Endothelial cell of umbilical vein (primary cell): ENCODE measurements at regions of chr16 and their contacts with region 1.

Region 1: DNA sequence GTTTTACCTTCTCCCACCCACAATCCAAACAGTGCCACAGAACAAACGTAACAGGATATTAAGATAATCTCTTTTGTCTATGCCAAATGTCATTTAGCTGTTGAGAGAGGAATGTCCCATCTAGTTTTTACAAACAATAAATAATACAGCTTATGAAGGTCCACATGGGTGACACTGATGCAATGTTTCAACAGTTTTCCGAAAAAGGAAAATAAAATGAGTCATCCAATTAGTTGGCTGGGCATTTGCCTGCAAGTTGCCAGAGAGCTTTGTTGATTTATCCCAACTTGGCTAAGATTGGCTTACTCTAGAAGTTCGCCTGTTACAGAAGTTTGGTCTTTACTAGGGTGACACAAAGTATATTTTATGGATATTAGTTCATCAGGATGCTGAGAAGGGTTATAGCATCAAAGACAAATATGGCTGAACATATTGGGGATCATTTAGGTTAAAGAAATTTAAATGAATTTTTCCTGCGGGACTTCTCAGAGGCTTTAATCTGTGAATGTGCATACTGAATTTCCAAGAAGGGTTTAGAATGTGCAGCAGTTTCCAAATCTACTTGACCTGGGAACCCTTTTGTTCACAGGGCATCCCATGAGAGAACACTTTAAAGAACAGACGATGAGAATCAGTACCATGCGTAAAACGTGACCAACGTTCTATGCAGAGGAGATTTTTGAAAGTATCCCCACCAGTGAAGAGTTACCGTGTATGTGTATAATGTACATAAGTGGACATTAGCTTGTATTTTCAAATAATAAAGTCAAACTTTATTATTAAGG is 73.1 kb downstream of the CDH13 start:
- DNase-seq: peak; percentile 96
- H3K4me3 ChIP-seq: no peak overlapping the region
- H3K27ac ChIP-seq: peak overlapping the region; percentile 76
- H3K4me1 ChIP-seq: peaks cover 46% of the 10 kb centered on the region
- H3K27me3 ChIP-seq: no peaks in the 10 kb centered on the region
- CTCF ChIP-seq: no peak
- POLR2A ChIP-seq: no peak

Region 2: DNA sequence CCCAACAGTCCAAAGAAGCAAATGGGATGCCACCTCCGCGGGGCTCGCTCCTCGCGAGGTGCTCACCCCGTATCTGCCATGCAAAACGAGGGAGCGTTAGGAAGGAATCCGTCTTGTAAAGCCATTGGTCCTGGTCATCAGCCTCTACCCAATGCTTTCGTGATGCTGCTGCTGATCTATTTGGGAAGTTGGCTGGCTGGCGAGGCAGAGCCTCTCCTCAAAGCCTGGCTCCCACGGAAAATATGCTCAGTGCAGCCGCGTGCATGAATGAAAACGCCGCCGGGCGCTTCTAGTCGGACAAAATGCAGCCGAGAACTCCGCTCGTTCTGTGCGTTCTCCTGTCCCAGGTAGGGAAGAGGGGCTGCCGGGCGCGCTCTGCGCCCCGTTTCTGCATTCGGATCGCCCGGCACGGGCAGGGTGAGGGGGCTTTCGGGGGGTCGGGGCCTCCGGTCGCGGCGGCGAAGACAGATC is 73.1 kb before region 1 on chr16 and contains the start of gene CDH13:
- CTCF ChIA-PET with region 1: interaction called, 14 read pairs
- POLR2A ChIA-PET with region 1: no interaction called
- dilution Hi-C with region 1: no loop called
- intact Hi-C with region 1: no loop called
- DNase-seq: peak; percentile 62
- H3K4me3 ChIP-seq: peak within 1 kb of the TSS; percentile 52 to 82 (median 66)
- H3K27ac ChIP-seq: peak within 1 kb of the TSS; percentile 96
- H3K4me1 ChIP-seq: peaks cover 46% of the 10 kb centered on the region
- H3K27me3 ChIP-seq: peaks cover 0 to 2% of the 10 kb centered on the region in 2 experiments
- CTCF ChIP-seq: no peak
- POLR2A ChIP-seq: no peak
- total RNA-seq, gene CDH13: 98.5 and 124 TPM in 2 replicates

Region 3: DNA sequence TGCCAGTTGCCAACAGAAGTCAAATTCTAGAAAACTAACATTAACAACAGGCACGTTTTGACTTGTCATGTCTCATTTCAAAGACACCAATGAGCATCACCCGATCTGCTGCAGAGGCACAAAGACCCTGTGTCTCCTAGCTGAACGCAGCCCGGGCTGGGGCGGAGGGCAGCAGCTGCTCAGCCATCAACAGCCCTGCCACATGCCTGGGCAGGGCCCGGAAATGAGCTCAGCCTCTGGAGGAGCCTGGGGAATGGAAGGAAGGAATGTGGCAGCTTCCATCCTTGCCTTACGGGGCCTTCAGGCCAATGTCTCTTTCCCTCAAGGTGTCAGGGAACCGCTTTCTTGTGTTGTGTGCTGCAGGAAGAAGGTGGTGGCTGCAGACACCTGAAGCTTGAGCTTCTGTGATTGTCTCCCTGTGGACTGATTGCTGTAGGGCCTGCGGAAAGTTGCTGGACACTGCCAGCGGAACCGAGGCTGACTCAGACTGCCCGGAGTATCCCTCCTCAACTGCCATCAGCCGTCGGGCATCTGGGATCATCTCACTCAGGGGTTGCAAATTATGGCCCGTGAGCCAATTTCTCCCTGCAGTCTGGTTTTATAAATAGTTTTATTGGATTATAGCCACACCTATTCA is 65.8 kb before region 1 on chr16:
- CTCF ChIA-PET with region 1: interaction called, 14 read pairs
- POLR2A ChIA-PET with region 1: no interaction called
- dilution Hi-C with region 1: no loop called
- intact Hi-C with region 1: loop called (anchors 1 kb)
- DNase-seq: peak; percentile 87
- H3K4me3 ChIP-seq: no peak overlapping the region
- H3K27ac ChIP-seq: peak overlapping the region; percentile 78
- H3K4me1 ChIP-seq: peaks cover 78% of the 10 kb centered on the region
- H3K27me3 ChIP-seq: no peaks in the 10 kb centered on the region
- CTCF ChIP-seq: no peak
- POLR2A ChIP-seq: peak; percentile 27

Region 4: GRCh38 chr16:82653550-82654511 is 46.1 kb before region 1 on chr16:
- CTCF ChIA-PET with region 1: interaction called, 8 read pairs
- POLR2A ChIA-PET with region 1: interaction called, 3 read pairs
- dilution Hi-C with region 1: no loop called
- intact Hi-C with region 1: loop called (anchors 1 kb)
- DNase-seq: peak; percentile 84
- H3K4me3 ChIP-seq: peak overlapping the region in 1 of 3 experiments; percentile 7
- H3K27ac ChIP-seq: peak overlapping the region; percentile 91
- H3K4me1 ChIP-seq: peaks cover 65% of the 10 kb centered on the region
- H3K27me3 ChIP-seq: no peaks in the 10 kb centered on the region
- CTCF ChIP-seq: no peak
- POLR2A ChIP-seq: no peak

Region 5: GRCh38 chr16:82735673-82736091 is 35.8 kb after region 1 on chr16:
- CTCF ChIA-PET with region 1: no interaction called
- POLR2A ChIA-PET with region 1: no interaction called
- dilution Hi-C with region 1: no loop called
- intact Hi-C with region 1: no loop called
- DNase-seq: no peak
- H3K4me3 ChIP-seq: no peak overlapping the region
- H3K27ac ChIP-seq: no peak overlapping the region
- H3K4me1 ChIP-seq: no peaks in the 10 kb centered on the region
- H3K27me3 ChIP-seq: no peaks in the 10 kb centered on the region
- CTCF ChIP-seq: no peak
- POLR2A ChIP-seq: no peak

Region 6: DNA sequence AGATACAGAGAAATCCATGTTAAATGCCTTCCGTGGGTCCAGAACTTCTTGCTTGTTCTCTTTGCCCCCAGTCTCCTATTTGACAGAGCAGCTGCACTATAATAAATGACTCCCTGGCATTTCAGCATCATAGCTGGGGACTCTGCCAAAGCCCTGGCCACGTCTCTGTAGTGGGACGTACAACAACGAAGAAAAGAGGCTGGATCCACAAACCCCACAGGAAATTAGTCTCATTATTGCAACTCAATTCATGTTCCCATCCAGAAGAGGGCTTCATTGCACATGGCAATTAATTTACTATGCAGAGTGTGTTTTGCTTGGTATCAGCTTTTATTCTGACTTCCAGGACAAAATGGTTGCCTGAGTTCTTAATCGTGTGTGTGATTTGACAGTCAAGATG is 48.1 kb after region 1 on chr16:
- CTCF ChIA-PET with region 1: interaction called, 3 read pairs
- POLR2A ChIA-PET with region 1: no interaction called
- dilution Hi-C with region 1: no loop called
- intact Hi-C with region 1: loop called (anchors 1 kb)
- DNase-seq: peak; percentile 94
- H3K4me3 ChIP-seq: peak overlapping the region in 1 of 3 experiments; percentile 7
- H3K27ac ChIP-seq: peak overlapping the region; percentile 57
- H3K4me1 ChIP-seq: peaks cover 38% of the 10 kb centered on the region
- H3K27me3 ChIP-seq: no peaks in the 10 kb centered on the region
- CTCF ChIP-seq: peak; percentile 29 to 40
- POLR2A ChIP-seq: no peak

Region 7: GRCh38 chr16:83002351-83003334 is 302.7 kb after region 1 on chr16:
- CTCF ChIA-PET with region 1: no interaction called
- POLR2A ChIA-PET with region 1: no interaction called
- dilution Hi-C with region 1: no loop called
- intact Hi-C with region 1: loop called (anchors 2 kb)
- DNase-seq: peak; percentile 88
- H3K4me3 ChIP-seq: no peak overlapping the region
- H3K27ac ChIP-seq: peak overlapping the region; percentile 73
- H3K4me1 ChIP-seq: peaks cover 36% of the 10 kb centered on the region
- H3K27me3 ChIP-seq: no peaks in the 10 kb centered on the region
- CTCF ChIP-seq: no peak
- POLR2A ChIP-seq: peak; percentile 49